Panc1 (cell line): ENCODE measurements at regions of chr1 and their contacts with region 1.

Region 1: DNA sequence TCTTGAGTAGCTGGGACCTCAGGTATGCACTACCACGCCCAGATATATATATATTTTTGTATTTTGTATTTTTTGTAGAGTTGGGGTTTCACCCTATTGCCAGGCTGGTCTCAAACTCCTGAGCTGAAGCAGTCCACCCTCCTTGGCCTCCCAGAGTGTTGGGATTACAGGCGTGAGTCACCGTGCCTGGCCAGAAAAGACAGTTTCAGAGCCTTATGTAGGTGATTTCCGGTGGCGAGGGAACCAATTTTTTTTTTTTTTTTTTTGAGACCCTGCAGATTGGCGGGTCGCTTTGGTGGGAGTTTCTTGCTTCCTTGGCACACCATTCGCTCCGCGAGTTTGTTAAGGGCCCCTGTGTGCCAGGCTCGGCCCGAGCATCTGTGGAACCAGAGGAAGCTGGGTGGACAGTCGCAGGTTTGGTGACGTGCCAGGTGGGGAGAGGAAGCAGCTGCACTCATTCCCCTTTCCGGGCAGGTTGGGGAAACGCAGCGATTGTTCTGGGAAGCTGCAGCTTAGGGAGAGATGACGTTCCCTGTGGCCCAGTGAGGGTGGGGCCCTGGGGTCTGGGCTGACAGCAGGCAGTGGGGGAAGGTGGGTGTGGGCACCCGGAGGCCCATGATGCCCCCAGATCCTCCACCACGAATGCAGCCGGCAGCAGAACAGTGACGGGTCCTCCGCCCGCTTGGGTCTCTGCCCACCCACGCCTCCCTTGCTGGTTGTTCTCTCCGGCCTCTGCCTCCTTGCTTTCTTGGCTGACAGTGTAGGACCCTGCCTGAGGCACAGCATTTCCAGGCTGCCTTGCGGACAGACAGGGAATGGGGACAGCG is 25.1 kb downstream of the SPSB1 start:
- DNase-seq: no peak
- ATAC-seq: peak; percentile 46
- H3K4me3 ChIP-seq: peak overlapping the region in 1 of 2 experiments; percentile 29; a peak in 2 of 4 replicates
- H3K27ac ChIP-seq: peak overlapping the region; percentile 81
- H3K4me1 ChIP-seq: peaks cover 94% of the 10 kb centered on the region
- H3K27me3 ChIP-seq: no peaks in the 10 kb centered on the region
- CTCF ChIP-seq: no peak

Region 2: DNA sequence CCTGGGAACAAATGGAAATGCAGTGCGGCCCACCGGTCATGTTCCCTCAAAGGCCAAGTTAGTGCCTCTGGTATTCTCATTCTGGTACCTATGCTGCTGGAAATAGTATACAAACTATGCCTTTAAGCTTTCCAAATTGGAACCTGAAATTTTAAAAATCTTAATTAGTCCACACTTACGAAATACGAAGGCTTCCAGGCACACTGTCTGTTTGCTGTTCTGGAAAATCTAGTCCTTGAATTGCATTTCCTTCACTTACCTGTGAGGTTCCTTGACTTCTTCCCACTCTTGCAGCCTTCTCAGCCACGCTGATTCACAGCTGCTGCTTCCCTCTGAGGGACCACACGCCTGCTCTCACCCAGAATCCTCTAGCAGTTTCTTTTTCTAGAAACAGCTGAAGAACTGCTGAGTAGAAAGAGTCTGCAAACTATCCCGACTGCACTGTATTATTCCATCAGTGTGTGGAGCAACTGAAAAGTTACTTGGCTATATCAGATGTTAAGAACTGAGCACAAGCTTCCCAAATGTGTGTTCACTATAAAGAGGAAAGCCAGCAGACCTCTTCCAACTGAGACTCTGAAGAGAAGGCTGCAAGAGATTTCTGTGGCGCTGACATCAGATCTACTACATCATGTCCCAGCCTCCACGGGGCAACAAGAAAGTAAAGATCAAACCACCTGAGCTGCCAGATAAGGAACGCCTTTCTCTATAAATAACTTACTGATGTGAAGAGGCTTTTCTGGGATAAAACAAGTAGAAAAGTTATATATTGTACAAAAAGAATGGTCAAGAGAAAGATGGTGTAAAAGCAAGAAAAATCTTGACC is 727.1 kb before region 1 on chr1:
- CTCF ChIA-PET with region 1: no interaction called
- POLR2A ChIA-PET with region 1: no interaction called
- in situ Hi-C with region 1: no loop called
- intact Hi-C with region 1: no loop called
- DNase-seq: no peak
- ATAC-seq: no peak
- H3K4me3 ChIP-seq: no peak overlapping the region
- H3K27ac ChIP-seq: no peak overlapping the region
- H3K4me1 ChIP-seq: peaks cover 14% of the 10 kb centered on the region; the same call in 1 of the 2 replicates
- H3K27me3 ChIP-seq: no peaks in the 10 kb centered on the region
- CTCF ChIP-seq: no peak

Region 3: DNA sequence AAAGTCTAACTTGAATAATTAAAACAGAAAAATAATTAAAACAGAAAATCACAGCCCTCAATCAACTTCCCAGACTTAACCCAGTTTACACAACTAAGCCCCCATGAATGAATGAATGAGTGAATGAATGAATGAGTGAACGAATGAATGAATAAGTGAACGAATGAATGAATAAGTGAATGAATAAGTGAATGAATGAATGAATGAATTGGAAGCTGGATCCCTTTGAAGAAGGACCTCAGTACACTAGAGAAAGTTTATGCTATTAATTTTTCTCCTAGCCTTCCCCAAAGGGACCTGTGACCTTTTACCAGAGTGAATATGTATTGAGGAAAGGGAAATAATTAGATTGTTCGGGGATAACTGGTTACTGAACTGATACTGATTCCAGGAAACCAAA is 19.5 kb before region 1 on chr1:
- CTCF ChIA-PET with region 1: no interaction called
- POLR2A ChIA-PET with region 1: interaction called, 14 read pairs
- in situ Hi-C with region 1: no loop called
- intact Hi-C with region 1: no loop called
- DNase-seq: no peak
- ATAC-seq: no peak
- H3K4me3 ChIP-seq: no peak overlapping the region
- H3K27ac ChIP-seq: no peak overlapping the region
- H3K4me1 ChIP-seq: peaks cover 58% of the 10 kb centered on the region
- H3K27me3 ChIP-seq: no peaks in the 10 kb centered on the region
- CTCF ChIP-seq: no peak

Region 4: DNA sequence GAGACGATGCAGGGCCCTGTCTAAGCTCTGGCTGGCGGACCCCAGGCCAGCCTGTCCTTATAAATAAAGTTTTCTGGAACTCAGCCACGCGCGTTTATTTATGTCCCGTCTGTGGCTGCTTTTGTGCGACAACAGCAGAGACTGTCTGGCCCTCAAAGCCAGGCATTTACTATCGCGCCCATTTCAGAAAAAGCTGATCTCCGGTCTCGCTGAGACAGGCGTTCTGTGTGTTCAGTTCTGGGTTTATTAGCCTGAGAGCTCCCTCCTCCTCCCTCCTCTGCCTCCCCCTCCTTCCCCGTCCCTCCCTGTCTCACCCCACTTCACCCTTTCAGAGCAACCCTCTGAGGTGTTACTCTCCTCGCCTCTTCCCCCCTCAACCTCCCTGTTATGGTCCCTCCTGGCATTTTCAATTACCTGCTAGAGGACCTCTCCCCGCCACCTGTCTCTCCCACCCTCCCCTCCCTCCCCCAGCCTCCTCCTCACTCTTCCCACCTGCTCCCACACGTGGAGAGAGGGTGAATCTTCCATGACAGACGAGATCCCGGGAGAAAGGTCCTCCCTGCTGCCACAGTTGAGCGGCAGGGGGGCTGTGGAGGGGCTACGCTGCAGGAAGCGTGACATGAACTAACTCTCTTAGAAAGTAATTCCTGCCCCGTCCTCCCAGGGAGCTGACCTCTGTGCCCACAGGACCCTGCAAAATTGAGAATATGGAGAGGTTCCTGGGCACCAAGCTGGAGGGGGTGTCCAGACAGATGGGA is 34.8 kb after region 1 on chr1:
- CTCF ChIA-PET with region 1: no interaction called
- POLR2A ChIA-PET with region 1: interaction called, 11 read pairs
- in situ Hi-C with region 1: no loop called
- intact Hi-C with region 1: no loop called
- DNase-seq: no peak
- ATAC-seq: no peak
- H3K4me3 ChIP-seq: no peak overlapping the region
- H3K27ac ChIP-seq: peak overlapping the region; percentile 17; the same call in 1 of the 2 replicates
- H3K4me1 ChIP-seq: peaks cover 33% of the 10 kb centered on the region
- H3K27me3 ChIP-seq: no peaks in the 10 kb centered on the region
- CTCF ChIP-seq: no peak

Region 5: GRCh38 chr1:9357958-9358357 is 40.2 kb after region 1 on chr1:
- CTCF ChIA-PET with region 1: no interaction called
- POLR2A ChIA-PET with region 1: interaction called, 11 read pairs
- in situ Hi-C with region 1: no loop called
- intact Hi-C with region 1: no loop called
- DNase-seq: no peak
- ATAC-seq: no peak
- H3K4me3 ChIP-seq: no peak overlapping the region
- H3K27ac ChIP-seq: no peak overlapping the region
- H3K4me1 ChIP-seq: peaks cover 21% of the 10 kb centered on the region
- H3K27me3 ChIP-seq: no peaks in the 10 kb centered on the region
- CTCF ChIP-seq: no peak

Region 6: DNA sequence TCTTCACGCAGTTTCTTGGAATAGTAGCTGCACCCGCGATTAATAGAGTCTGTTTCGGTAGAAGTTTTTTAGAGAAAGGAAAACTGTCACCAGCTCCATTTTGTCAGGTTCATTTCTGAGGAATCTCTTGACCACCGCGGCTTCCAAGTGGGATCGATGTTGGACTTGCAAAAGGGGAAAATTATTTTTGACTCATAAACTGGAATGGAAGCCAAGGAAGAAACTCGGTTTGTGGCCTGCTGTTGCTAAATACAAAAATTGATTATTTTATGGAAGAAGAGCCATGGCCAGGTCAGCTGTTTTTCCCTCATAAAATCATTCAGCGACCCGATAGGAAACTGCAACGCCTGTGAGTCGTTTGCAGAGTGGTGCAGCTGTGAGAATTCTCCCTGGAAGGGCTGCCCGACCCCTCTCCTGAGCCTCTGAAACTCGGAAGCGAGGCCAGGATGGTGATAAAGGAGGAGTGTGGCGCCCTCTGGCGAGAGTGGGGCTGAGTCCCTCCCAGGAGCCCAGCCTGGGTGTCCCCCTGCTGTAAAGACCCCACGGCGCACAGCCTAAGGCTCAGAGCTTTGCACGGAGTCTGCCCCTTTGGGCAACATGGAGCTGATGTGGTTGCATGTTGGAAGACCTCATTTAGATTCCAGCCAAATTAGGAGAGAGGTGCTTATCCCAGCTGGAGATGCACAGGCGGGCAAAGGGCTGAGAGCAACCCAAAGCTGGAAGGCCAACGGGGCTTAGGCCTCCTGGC is 137.9 kb after region 1 on chr1:
- CTCF ChIA-PET with region 1: interaction called, 12 read pairs
- POLR2A ChIA-PET with region 1: no interaction called
- in situ Hi-C with region 1: no loop called
- intact Hi-C with region 1: no loop called
- DNase-seq: no peak
- ATAC-seq: peak; percentile 85
- H3K4me3 ChIP-seq: no peak overlapping the region
- H3K27ac ChIP-seq: peak overlapping the region; percentile 25
- H3K4me1 ChIP-seq: peaks cover 13% of the 10 kb centered on the region
- H3K27me3 ChIP-seq: no peaks in the 10 kb centered on the region
- CTCF ChIP-seq: peak; percentile 88